WTC11 (cell line): ENCODE measurements at regions of chr5 and their contacts with region 1.

Region 1: DNA sequence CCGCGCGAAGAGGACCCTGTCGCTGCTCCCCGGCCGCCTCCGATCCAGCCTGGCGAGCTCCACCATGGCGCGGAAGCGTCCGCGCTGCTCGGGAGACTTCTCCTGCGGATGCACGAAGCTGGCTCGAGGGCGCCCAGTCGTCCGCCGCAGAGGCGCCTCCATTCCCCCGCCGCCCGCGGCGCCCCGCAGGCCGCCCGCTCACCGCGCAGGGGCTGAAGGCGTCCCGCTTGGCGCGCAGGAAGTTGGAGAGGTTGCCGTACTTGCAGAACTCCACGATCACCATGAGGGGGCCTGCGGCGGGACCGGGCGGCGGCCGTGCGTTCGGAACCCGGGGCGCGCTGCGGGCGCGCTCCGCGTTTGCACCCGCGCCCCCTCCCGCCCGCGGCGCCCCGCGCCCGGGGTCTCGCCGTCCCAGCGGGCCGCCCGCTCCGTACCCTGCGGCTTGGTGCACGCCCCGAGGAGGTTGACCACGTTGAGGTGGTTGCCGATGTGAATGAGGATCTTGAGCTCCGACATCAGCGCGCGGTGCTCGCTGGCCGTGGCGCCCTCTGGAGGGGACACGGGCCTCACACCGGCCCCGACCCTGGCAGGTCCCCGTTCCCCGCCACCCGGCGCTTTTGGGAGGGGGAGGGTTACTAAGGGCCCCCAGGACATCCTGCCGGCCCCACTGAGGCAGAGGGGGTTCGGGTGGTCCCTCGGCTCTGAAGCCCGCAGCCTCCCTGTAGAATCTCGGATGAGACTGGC is 27.7 kb upstream of the SCGB3A1 start:
- DNase-seq: peak; percentile 76
- ATAC-seq: peak; percentile 76
- H3K4me3 Mint-ChIP-seq: peak overlapping the region; percentile 63
- H3K27ac Mint-ChIP-seq: no peak overlapping the region
- H3K4me1 Mint-ChIP-seq: peaks cover 2% of the 10 kb centered on the region; the same call in 1 of the 2 replicates
- H3K27me3 Mint-ChIP-seq: peaks cover 16% of the 10 kb centered on the region
- CTCF ChIP-seq: peak; percentile 36; the same call in 1 of the 2 replicates

Region 2: DNA sequence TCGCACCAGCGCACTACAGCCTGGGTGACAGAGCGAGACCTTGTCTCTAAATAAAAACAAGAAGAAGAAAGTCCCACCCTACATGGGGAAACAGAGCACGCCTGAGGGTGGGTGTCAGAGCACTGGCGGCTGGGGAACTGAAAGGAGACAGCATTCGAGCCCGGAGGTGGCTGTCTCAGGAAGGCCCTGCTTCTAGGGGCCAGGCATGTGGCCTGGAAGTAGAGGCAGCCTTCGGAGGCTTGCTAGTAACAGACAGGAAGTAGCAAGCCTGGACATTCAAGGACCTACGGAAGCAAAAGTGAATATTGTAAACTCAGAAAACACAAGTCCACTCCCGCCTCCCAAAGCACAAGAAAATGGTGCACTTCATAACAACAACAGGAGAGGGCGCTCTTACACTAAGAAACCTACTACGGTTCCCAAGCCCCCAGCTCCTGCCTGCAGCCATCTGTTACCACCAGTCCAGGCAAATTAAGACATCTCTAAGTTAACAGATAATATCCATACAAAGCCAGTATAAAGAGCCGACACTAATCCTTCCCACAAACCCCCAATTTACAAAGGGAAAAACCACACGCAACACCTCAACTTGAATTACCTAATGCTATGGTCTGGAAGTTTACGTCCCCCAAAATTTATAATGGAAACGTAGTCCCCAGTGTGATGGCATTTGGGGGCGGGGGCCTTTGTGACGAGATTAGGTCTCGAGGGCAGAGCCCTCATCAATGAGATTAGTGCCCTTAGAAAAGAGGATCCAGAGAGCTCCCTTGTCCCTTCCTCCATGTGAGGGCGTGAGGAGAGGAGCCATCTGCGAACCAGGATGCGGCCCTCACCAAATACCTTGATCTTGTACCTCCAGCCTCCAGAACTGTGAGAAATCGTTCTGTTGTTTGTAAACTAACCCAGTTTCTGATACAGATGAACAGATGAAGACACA is 417.7 kb before region 1 on chr5:
- CTCF ChIA-PET with region 1: interaction called, 13 read pairs
- POLR2A ChIA-PET with region 1: no interaction called
- DNase-seq: peak; percentile 83
- ATAC-seq: peak; percentile 84
- H3K4me3 Mint-ChIP-seq: no peak overlapping the region
- H3K27ac Mint-ChIP-seq: no peak overlapping the region
- H3K4me1 Mint-ChIP-seq: peaks cover 2% of the 10 kb centered on the region; the same call in 1 of the 2 replicates
- H3K27me3 Mint-ChIP-seq: no peaks in the 10 kb centered on the region
- CTCF ChIP-seq: peak; percentile 84

Region 3: GRCh38 chr5:180271221-180271620 is 347.8 kb before region 1 on chr5:
- CTCF ChIA-PET with region 1: no interaction called
- POLR2A ChIA-PET with region 1: no interaction called
- DNase-seq: no peak
- ATAC-seq: no peak
- H3K4me3 Mint-ChIP-seq: no peak overlapping the region
- H3K27ac Mint-ChIP-seq: no peak overlapping the region
- H3K4me1 Mint-ChIP-seq: no peaks in the 10 kb centered on the region
- H3K27me3 Mint-ChIP-seq: no peaks in the 10 kb centered on the region
- CTCF ChIP-seq: no peak

Region 4: DNA sequence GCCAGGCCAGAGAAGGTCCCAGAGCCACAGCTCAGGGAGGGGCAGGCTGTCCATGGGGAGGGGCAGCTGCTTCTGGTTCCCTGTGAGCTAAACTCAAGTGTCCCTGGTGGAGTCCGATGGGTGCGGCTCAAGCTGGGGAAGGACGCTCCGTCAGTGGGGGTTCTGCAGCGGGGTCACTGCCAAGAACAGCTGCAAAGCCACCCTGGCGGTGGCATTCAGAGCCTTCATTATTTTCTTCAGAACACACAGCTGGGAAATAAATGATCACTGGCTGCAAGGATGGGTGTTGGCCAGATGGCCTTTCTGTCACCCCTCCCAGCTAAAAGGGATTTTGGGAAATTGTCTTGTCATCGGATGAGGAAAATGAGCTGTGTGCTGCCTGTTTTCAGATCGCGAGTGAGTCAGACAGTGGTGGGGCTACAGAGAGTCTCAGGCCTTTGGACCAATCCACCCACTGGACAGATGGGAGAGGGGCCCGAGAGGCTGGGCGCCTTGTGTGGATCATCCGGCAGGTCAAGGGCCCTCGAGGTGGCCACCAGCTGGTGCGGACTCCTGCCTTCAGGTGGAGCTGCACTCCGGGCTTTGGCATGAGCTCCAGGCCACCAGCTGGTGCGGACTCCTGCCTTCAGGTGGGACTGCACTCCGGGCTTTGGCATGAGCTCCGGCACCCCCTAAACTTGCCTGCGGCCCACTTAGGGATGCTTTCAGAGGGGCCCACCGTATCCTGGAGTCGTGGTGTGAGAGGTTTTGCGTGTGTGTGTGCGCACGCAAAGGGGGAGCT is 247.9 kb before region 1 on chr5:
- CTCF ChIA-PET with region 1: interaction called, 11 read pairs
- POLR2A ChIA-PET with region 1: no interaction called
- DNase-seq: no peak
- ATAC-seq: peak; percentile 43; the same call in 1 of the 2 replicates
- H3K4me3 Mint-ChIP-seq: no peak overlapping the region
- H3K27ac Mint-ChIP-seq: no peak overlapping the region
- H3K4me1 Mint-ChIP-seq: peaks cover 2% of the 10 kb centered on the region; the same call in 1 of the 2 replicates
- H3K27me3 Mint-ChIP-seq: no peaks in the 10 kb centered on the region
- CTCF ChIP-seq: no peak

Region 5: GRCh38 chr5:180605554-180606214 is 13.3 kb before region 1 on chr5:
- CTCF ChIA-PET with region 1: interaction called, 54 read pairs
- POLR2A ChIA-PET with region 1: no interaction called
- DNase-seq: peak; percentile 78
- ATAC-seq: peak; percentile 60
- H3K4me3 Mint-ChIP-seq: no peak overlapping the region
- H3K27ac Mint-ChIP-seq: no peak overlapping the region
- H3K4me1 Mint-ChIP-seq: no peaks in the 10 kb centered on the region
- H3K27me3 Mint-ChIP-seq: no peaks in the 10 kb centered on the region
- CTCF ChIP-seq: peak; percentile 85

Region 6: GRCh38 chr5:180648641-180649296 is 29.8 kb after region 1 on chr5:
- CTCF ChIA-PET with region 1: interaction called, 56 read pairs
- POLR2A ChIA-PET with region 1: interaction called, 6 read pairs
- DNase-seq: peak; percentile 75
- ATAC-seq: peak; percentile 74
- H3K4me3 Mint-ChIP-seq: peak overlapping the region; percentile 74
- H3K27ac Mint-ChIP-seq: no peak overlapping the region
- H3K4me1 Mint-ChIP-seq: peaks cover 9% of the 10 kb centered on the region
- H3K27me3 Mint-ChIP-seq: peaks cover 52% of the 10 kb centered on the region
- CTCF ChIP-seq: 0 out of 2 replicates have a peak, but pooled peaks have one; percentile 12

Region 7: DNA sequence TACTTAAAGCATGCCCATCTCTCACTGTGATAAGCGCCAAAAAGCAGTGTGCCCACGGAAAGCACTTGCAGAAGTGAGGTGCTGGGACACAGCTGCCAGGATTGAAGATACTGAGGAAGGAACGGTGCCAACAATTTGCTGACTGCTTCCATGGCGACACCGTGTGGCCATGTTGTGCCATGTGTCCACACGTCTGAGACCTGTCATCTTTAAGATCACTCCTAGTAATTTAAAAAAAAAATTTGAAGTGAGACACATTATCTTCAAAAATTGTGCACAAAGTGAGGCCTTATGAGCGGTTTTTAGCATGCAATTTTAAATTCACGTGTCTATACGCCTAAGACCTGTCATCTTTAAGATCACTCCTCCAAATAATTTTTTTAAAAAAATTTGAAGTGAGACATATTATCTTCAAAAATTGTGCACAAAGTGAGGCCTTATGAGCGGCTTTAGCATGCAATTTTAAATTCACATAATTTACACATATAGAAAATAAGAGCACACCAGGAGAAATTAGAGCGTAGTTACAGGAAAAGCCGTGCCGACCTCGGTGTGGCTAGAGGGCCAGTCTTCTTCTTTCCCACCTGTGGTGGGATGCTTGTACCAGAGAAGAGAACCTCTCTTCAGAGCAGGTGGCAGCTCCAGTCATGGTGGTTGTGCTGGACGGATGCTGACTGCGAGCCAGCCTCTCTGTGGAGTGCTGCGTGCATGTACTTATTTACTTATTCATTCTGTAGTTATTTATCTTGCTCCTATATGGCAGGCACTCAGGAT is 51.8 kb after region 1 on chr5:
- CTCF ChIA-PET with region 1: interaction called, 16 read pairs
- POLR2A ChIA-PET with region 1: no interaction called
- DNase-seq: peak; percentile 63
- ATAC-seq: peak; percentile 53
- H3K4me3 Mint-ChIP-seq: no peak overlapping the region
- H3K27ac Mint-ChIP-seq: no peak overlapping the region
- H3K4me1 Mint-ChIP-seq: peaks cover 12% of the 10 kb centered on the region
- H3K27me3 Mint-ChIP-seq: peaks cover 44% of the 10 kb centered on the region
- CTCF ChIP-seq: peak; percentile 49

Region 8: GRCh38 chr5:180718810-180719453 is 99.9 kb after region 1 on chr5:
- CTCF ChIA-PET with region 1: interaction called, 13 read pairs
- POLR2A ChIA-PET with region 1: no interaction called
- DNase-seq: no peak
- ATAC-seq: no peak
- H3K4me3 Mint-ChIP-seq: no peak overlapping the region
- H3K27ac Mint-ChIP-seq: no peak overlapping the region
- H3K4me1 Mint-ChIP-seq: no peaks in the 10 kb centered on the region
- H3K27me3 Mint-ChIP-seq: no peaks in the 10 kb centered on the region; the same call in 1 of the 2 replicates
- CTCF ChIP-seq: no peak

Region 9: DNA sequence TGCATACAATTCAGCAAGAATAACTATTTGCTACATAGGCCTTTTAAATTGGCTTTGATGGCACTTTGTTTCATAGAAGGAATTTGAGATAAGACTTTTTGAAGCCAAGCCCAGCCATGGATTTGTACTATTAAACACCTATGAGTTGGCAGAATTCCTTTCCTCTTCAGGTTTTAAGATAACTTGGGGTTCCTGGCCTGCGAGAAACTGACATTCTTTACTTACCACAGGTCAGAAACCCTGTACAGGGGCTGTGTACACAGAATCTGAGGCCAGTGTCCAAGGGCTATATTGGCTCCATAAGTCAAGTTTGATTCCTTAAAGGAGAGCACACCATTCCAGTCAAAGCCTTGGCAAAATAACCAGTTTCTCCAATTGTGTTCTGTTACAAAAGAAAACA is 358.9 kb after region 1 on chr5:
- CTCF ChIA-PET with region 1: no interaction called
- POLR2A ChIA-PET with region 1: no interaction called
- DNase-seq: no peak
- ATAC-seq: no peak
- H3K4me3 Mint-ChIP-seq: no peak overlapping the region
- H3K27ac Mint-ChIP-seq: no peak overlapping the region
- H3K4me1 Mint-ChIP-seq: peaks cover 14% of the 10 kb centered on the region
- H3K27me3 Mint-ChIP-seq: peaks cover 7% of the 10 kb centered on the region
- CTCF ChIP-seq: no peak